Sigmoid colon (tissue), 7 donors: ENCODE measurements at regions of chr3 and their contacts with region 1.

Region 1: GRCh38 chr3:64399205-64399800 is 174.0 kb upstream of the PRICKLE2 start:
- DNase-seq: no peak
- H3K4me3 ChIP-seq: no peak overlapping the region
- H3K27ac ChIP-seq: peak overlapping the region in 3 of 4 donors; percentile 66 to 83 (median 80)
- H3K4me1 ChIP-seq: peaks cover 0 to 31% (median 24%) of the 10 kb centered on the region in 4 donors
- H3K27me3 ChIP-seq: no peaks in the 10 kb centered on the region
- CTCF ChIP-seq: peak; percentile 73 to 87 (median 76)
- EP300 ChIP-seq: no peak
- POLR2A ChIP-seq: no peak

Region 2: DNA sequence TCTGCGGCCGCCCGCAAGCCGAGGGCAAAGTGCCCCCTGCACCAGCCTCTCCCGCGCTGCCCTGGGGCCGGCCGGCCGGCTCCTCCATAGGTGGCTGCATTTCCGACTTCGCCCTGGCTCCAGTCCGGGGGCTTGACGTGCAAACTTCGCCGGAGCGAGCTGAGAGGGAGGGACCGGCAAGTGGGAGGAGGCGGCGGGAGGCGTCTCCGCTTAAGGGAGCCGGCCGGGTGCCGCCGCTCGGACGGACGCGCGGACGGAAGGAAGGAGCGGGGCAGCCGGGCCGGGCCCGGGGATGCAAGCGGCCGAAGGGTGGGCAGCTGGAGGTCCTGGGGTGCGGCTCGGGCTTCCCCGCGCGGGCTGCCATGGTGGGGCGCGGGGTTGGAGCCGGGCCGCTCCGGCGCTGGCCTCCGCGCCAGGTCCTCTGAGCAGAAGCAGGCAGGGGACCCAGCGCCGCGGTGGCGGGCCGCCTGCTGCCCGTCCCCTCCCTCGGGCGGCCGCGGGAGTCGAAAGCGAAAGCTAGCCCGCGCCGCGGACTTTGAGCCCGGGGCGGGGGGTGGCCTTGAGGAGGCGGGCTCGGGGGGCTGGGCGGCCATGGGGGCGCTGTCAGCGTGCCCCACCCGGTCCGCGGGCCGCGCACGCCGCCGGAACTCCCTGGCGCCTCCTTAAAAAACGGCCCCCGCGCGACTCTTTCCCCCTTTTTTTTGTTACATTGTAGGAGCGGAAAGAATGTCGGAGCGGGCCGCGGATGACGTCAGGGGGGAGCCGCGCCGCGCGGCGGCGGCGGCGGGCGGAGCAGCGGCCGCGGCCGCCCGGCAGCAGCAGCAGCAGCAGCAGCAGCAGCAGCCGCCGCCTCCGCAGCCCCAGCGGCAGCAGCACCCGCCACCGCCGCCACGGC is 487.2 kb before region 1 on chr3 and contains the start of gene SCAANT1:
- intact Hi-C with region 1: no loop called
- DNase-seq: peak; percentile 97
- H3K4me3 ChIP-seq: peak within 1 kb of the TSS; percentile 44 to 93 (median 76)
- H3K27ac ChIP-seq: peak within 1 kb of the TSS; percentile 97 to 99 (median 98)
- H3K4me1 ChIP-seq: peaks cover 0 to 33% (median 28%) of the 10 kb centered on the region in 4 donors
- H3K27me3 ChIP-seq: no peaks in the 10 kb centered on the region
- CTCF ChIP-seq: peak in 1 of 4 experiments; percentile 10
- EP300 ChIP-seq: peak in 1 of 4 donors; percentile 28
- POLR2A ChIP-seq: peak; percentile 36 to 50
- total RNA-seq, gene SCAANT1: not detected

Region 3: GRCh38 chr3:64030741-64031140 is 368.6 kb before region 1 on chr3:
- intact Hi-C with region 1: loop called (anchors 1 kb)
- DNase-seq: peak; percentile 82
- H3K4me3 ChIP-seq: peak overlapping the region in 3 of 4 donors; percentile 15 to 39 (median 33)
- H3K27ac ChIP-seq: peak overlapping the region in 2 of 4 donors; percentile 38 to 51
- H3K4me1 ChIP-seq: peaks cover 0 to 30% (median 12%) of the 10 kb centered on the region in 4 donors
- H3K27me3 ChIP-seq: no peaks in the 10 kb centered on the region
- CTCF ChIP-seq: peak; percentile 87 to 97 (median 88)
- EP300 ChIP-seq: no peak
- POLR2A ChIP-seq: no peak

Region 4: DNA sequence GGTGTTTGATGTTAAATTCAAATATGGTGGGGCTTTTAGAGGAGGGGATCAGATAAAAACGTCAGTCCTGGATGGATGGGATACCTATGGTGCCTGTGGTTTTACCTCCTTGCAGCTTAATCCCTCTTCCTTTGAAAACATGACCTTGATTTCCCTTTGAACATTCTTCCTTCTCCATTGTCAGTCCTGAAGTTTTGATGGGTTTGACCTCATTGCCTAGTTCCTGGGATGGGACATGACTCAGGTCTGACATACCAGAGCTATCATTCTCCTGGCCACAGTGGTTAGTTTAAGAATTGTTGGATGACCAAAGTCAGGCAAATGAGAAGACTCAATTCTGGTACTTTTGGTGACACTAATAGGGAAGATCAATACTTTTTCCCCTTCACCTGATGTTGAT is 261.3 kb before region 1 on chr3:
- intact Hi-C with region 1: loop called (anchors 5 kb)
- DNase-seq: no peak
- H3K4me3 ChIP-seq: no peak overlapping the region
- H3K27ac ChIP-seq: peak overlapping the region in 3 of 4 donors; percentile 10 to 35 (median 21)
- H3K4me1 ChIP-seq: peaks cover 0 to 69% (median 58%) of the 10 kb centered on the region in 4 donors
- H3K27me3 ChIP-seq: no peaks in the 10 kb centered on the region
- CTCF ChIP-seq: no peak
- EP300 ChIP-seq: no peak
- POLR2A ChIP-seq: no peak

Region 5: DNA sequence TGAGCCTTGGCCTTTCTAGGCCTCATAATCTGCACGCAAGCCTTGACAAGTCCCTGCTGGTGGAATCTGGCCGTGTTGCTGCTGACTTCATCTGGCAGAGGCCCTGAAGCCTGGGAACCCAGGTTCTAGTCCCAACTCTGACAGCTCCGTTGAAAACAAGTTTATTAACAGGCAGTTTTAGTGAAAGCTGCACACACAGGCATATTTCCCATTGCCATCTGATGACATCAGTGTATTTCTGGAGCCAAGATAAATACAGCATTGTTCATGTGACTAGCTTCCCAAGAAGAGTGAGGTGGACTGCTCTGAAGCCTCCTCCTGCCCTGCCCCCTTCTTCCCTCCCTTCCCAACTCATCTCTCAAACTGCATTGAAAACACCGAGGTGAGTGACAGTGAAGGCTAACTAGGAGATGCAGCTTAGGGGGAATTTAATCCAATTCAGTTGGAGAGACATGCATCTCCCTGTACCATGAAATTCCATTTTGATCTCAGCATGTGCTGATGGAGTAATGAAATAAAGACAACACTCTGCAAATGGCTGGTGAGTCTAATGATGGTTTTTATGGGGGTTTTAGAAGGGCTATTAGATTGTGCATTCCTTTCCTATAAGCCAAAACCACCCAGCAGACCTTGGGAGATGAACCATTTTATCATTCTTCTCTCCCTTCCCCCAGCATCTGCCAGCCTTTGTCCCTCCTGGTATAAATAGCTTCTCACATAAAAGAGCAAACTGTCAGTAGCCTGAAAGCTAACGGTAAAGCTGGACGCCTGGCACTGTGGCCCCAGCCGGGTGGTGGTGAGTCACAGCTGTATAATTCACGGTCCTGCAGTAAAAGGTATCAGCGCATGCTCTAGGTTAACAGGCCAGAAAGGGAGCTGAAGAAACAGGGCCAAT is 212.0 kb before region 1 on chr3:
- intact Hi-C with region 1: loop called (anchors 5 kb)
- DNase-seq: peak; percentile 94
- H3K4me3 ChIP-seq: no peak overlapping the region
- H3K27ac ChIP-seq: peak overlapping the region; percentile 80 to 87 (median 85)
- H3K4me1 ChIP-seq: peaks cover 0 to 98% (median 85%) of the 10 kb centered on the region in 4 donors
- H3K27me3 ChIP-seq: no peaks in the 10 kb centered on the region
- CTCF ChIP-seq: peak in 1 of 4 experiments; percentile 14
- EP300 ChIP-seq: peak in 2 of 4 donors; percentile 68 to 89
- POLR2A ChIP-seq: no peak

Region 6: DNA sequence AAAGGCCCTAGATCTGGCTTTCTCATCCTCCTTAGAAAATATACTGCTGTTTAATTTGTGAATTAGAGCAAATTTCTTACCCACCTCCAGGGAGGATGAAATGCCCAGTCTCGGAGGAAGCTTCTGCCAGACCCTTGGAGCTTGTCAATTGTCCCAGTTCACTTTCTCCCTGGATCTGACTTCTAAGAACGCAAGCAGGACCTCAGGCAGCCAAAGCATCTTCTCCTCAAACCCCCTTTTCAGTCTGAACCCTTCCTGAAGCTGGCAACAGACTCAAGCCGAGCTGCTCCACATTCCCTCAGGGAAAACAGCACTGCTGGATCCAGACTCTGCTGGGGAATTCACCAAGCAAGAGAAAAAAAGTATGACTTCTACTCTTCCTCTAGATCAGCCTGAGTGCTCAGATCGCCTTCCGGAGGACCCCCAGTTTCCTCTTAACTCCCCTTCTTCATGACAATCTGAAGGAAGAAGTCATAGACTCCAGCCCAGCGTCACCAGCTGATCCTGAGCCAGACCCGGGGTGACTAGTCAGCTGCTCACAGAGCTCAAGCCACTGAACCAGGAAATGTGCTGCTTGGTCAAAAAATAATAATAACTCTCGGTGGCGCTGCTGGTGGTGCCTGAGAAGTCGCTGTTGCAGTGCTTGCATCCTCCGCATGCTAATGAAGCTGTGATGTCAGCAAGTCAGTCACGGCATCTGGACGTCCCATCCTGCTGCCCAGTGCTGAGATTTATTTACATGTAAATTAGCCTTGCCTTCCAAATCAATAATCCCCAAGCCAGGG is 174.3 kb before region 1 on chr3 and contains the start of gene PRICKLE2:
- intact Hi-C with region 1: loop called (anchors 5 kb)
- DNase-seq: peak; percentile 90
- H3K4me3 ChIP-seq: peak within 1 kb of the TSS; percentile 5 to 38 (median 36)
- H3K27ac ChIP-seq: peak within 1 kb of the TSS; percentile 75 to 90 (median 87)
- H3K4me1 ChIP-seq: peaks cover 0 to 89% (median 82%) of the 10 kb centered on the region in 4 donors
- H3K27me3 ChIP-seq: no peaks in the 10 kb centered on the region
- CTCF ChIP-seq: peak in 3 of 4 experiments; percentile 17 to 25 (median 17)
- EP300 ChIP-seq: no peak
- POLR2A ChIP-seq: peak in 1 of 2 donors; percentile 4
- total RNA-seq, gene PRICKLE2: 61.1 to 96.7 (median 69.9) TPM

Region 7: GRCh38 chr3:64351713-64352638 is 47.3 kb before region 1 on chr3:
- intact Hi-C with region 1: loop called (anchors 5 kb)
- DNase-seq: no peak
- H3K4me3 ChIP-seq: no peak overlapping the region
- H3K27ac ChIP-seq: peak overlapping the region; percentile 70 to 90 (median 80)
- H3K4me1 ChIP-seq: peaks cover 0 to 78% (median 64%) of the 10 kb centered on the region in 4 donors
- H3K27me3 ChIP-seq: no peaks in the 10 kb centered on the region
- CTCF ChIP-seq: no peak
- EP300 ChIP-seq: no peak
- POLR2A ChIP-seq: no peak

Region 8: GRCh38 chr3:64484289-64484992 is 85.1 kb after region 1 on chr3:
- intact Hi-C with region 1: loop called (anchors 1 kb)
- DNase-seq: peak; percentile 87
- H3K4me3 ChIP-seq: no peak overlapping the region
- H3K27ac ChIP-seq: no peak overlapping the region
- H3K4me1 ChIP-seq: peaks cover 0 to 9% (median 3%) of the 10 kb centered on the region in 4 donors
- H3K27me3 ChIP-seq: no peaks in the 10 kb centered on the region
- CTCF ChIP-seq: peak; percentile 80 to 90 (median 84)
- EP300 ChIP-seq: no peak
- POLR2A ChIP-seq: no peak

Region 9: DNA sequence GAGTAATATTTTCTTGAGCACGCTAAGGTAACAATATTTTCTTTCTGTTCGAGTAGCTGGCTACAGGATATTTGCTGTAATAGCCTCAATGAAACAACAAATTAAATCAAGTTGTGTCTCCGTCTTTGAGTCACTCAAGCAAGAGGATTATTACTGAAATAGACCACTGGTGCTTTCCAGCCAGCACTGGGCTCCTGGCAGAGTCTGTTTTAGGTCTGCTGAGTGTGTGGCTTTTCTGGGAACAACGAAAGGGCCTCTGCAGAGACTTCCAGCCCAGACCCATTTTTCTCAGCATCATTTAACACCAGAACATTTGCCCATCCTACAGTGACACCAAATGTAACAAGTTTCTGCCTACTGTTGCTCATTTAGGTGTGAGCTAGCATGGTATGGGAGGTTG is 986.5 kb after region 1 on chr3:
- intact Hi-C with region 1: no loop called
- DNase-seq: no peak
- H3K4me3 ChIP-seq: no peak overlapping the region
- H3K27ac ChIP-seq: peak overlapping the region in 3 of 4 donors; percentile 54 to 69 (median 61)
- H3K4me1 ChIP-seq: peaks cover 0 to 17% (median 8%) of the 10 kb centered on the region in 4 donors
- H3K27me3 ChIP-seq: no peaks in the 10 kb centered on the region
- CTCF ChIP-seq: no peak
- EP300 ChIP-seq: no peak
- POLR2A ChIP-seq: no peak